ENCODE measurements at regions of chr11 and their contacts with region 1.

Region 1: GRCh38 chr11:32960553-32961164 is 55.0 kb upstream of the DEPDC7 start:
- DNase-seq: peak in 7 of 9 donors; percentile 33 to 66 (median 55)
- ATAC-seq: peak; percentile 67
- H3K4me3 ChIP-seq: no peak overlapping the region
- H3K4me3 Mint-ChIP-seq: no peak overlapping the region
- H3K27ac ChIP-seq: no peak overlapping the region
- H3K27ac Mint-ChIP-seq: no peak overlapping the region
- H3K4me1 ChIP-seq: no peaks in the 10 kb centered on the region
- H3K4me1 Mint-ChIP-seq: peaks cover 0 to 5% (median 0%) of the 10 kb centered on the region in 7 donors
- H3K27me3 ChIP-seq: no peaks in the 10 kb centered on the region
- H3K27me3 Mint-ChIP-seq: no peaks in the 10 kb centered on the region

Region 2: DNA sequence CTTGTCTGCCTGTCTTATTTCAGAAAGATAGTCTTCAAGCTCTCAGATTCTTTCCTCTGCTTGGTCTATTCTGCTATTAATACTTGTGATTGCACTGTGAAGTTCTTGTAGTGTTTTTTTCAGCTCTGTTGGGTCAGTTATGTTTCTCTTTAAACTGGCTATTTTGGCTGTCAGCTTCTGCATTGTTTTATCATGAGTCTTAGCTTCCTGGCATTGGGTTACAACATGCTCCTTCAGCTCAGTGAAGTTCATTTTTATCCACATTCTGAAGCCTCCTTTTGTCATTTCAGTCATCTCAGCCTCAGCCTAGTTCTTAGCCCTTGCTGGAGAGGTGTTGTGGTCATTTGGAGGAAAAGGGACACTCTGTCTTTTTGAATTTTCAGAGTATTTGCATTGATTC is 39.5 kb after region 1 on chr11:
- CTCF ChIA-PET with region 1: no interaction called
- POLR2A ChIA-PET with region 1: interaction called, 4 read pairs
- intact Hi-C with region 1: loop called in 1 of 2 experiments (anchors 1 kb)
- DNase-seq: no peak
- ATAC-seq: no peak
- H3K4me3 ChIP-seq: no peak overlapping the region
- H3K4me3 Mint-ChIP-seq: no peak overlapping the region
- H3K27ac ChIP-seq: no peak overlapping the region
- H3K27ac Mint-ChIP-seq: no peak overlapping the region
- H3K4me1 ChIP-seq: peaks cover 0 to 11% of the 10 kb centered on the region in 2 donors
- H3K4me1 Mint-ChIP-seq: peaks cover 7 to 17% (median 13%) of the 10 kb centered on the region in 7 donors
- H3K27me3 ChIP-seq: no peaks in the 10 kb centered on the region
- H3K27me3 Mint-ChIP-seq: peaks cover 0 to 73% (median 0%) of the 10 kb centered on the region in 5 donors

Region 3: GRCh38 chr11:33015621-33016551 is 55.2 kb after region 1 on chr11 and contains the start of gene DEPDC7:
- CTCF ChIA-PET with region 1: interaction called, 4 read pairs
- POLR2A ChIA-PET with region 1: interaction called, 3 read pairs
- intact Hi-C with region 1: loop called (anchors 2 kb)
- DNase-seq: peak; percentile 72 to 84 (median 81)
- ATAC-seq: peak; percentile 90
- H3K4me3 ChIP-seq: peak within 1 kb of the TSS; percentile 65
- H3K4me3 Mint-ChIP-seq: peak within 1 kb of the TSS; percentile 86 to 93 (median 90)
- H3K27ac ChIP-seq: peak within 1 kb of the TSS; percentile 50
- H3K27ac Mint-ChIP-seq: peak within 1 kb of the TSS in 6 of 9 donors; percentile 63 to 77 (median 69)
- H3K4me1 ChIP-seq: peaks cover 14 to 23% of the 10 kb centered on the region in 2 donors
- H3K4me1 Mint-ChIP-seq: peaks cover 14 to 73% (median 58%) of the 10 kb centered on the region in 7 donors
- H3K27me3 ChIP-seq: peaks cover 0 to 7% of the 10 kb centered on the region in 2 donors
- H3K27me3 Mint-ChIP-seq: peaks cover 0 to 74% (median 5%) of the 10 kb centered on the region in 5 donors
- total RNA-seq, gene DEPDC7: 0.65 to 9.6 (median 2.1) TPM

Region 4: GRCh38 chr11:33329705-33330329 is 369.2 kb after region 1 on chr11:
- CTCF ChIA-PET with region 1: no interaction called
- POLR2A ChIA-PET with region 1: no interaction called
- intact Hi-C with region 1: loop called (anchors 1 kb)
- DNase-seq: peak in 7 of 9 donors; percentile 20 to 59 (median 49)
- ATAC-seq: peak; percentile 82
- H3K4me3 ChIP-seq: no peak overlapping the region
- H3K4me3 Mint-ChIP-seq: no peak overlapping the region
- H3K27ac ChIP-seq: no peak overlapping the region
- H3K27ac Mint-ChIP-seq: peak overlapping the region in 2 of 9 donors; percentile 54 to 80
- H3K4me1 ChIP-seq: no peaks in the 10 kb centered on the region
- H3K4me1 Mint-ChIP-seq: peaks cover 2 to 45% (median 28%) of the 10 kb centered on the region in 7 donors
- H3K27me3 ChIP-seq: no peaks in the 10 kb centered on the region
- H3K27me3 Mint-ChIP-seq: no peaks in the 10 kb centered on the region

Measured in naive thymus-derived CD4-positive, alpha-beta T cell (primary cell).